Activated B cell treated with CpG ODN at 0.5 μM for 24 hours (primary cell): ENCODE measurements at regions of chr9 and their contacts with region 1.

Region 1: GRCh38 chr9:127916665-127917613 is at the start of gene ST6GALNAC4:
- DNase-seq: peak; percentile 94
- ATAC-seq: peak; percentile 83
- H3K4me3 Mint-ChIP-seq: peak within 1 kb of the TSS; percentile 88
- H3K27ac Mint-ChIP-seq: peak within 1 kb of the TSS; percentile 95
- H3K4me1 Mint-ChIP-seq: peaks cover 74% of the 10 kb centered on the region
- H3K27me3 Mint-ChIP-seq: no peaks in the 10 kb centered on the region
- CTCF ChIP-seq: no peak
- total RNA-seq, gene ST6GALNAC4: 71.3 and 85.4 TPM in 2 replicates

Region 2: DNA sequence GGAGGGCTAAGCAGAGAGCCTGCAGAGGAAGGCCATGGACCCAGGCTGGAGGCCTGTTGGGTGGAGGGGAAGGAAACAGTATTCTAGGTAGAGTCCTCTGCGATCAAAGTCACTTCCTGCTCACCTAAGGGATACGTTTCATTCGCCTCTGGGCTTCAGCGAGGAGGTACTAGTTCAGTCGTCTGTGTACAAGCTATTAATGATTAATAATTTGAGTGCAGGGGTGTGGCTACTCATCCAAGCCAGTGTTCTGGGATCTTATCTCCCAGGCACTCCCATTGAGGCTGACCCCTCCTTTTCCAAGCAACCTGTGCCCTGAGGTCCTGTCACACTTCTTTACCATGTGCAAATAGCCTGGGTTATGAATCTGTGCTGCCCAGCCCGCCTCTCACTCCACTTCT is 977.1 kb before region 1 on chr9:
- CTCF ChIA-PET with region 1: no interaction called
- POLR2A ChIA-PET with region 1: no interaction called
- intact Hi-C with region 1: loop called (anchors 2 kb)
- DNase-seq: no peak
- ATAC-seq: no peak
- H3K4me3 Mint-ChIP-seq: no peak overlapping the region
- H3K27ac Mint-ChIP-seq: no peak overlapping the region
- H3K4me1 Mint-ChIP-seq: peaks cover 5% of the 10 kb centered on the region
- H3K27me3 Mint-ChIP-seq: no peaks in the 10 kb centered on the region
- CTCF ChIP-seq: no peak

Region 3: DNA sequence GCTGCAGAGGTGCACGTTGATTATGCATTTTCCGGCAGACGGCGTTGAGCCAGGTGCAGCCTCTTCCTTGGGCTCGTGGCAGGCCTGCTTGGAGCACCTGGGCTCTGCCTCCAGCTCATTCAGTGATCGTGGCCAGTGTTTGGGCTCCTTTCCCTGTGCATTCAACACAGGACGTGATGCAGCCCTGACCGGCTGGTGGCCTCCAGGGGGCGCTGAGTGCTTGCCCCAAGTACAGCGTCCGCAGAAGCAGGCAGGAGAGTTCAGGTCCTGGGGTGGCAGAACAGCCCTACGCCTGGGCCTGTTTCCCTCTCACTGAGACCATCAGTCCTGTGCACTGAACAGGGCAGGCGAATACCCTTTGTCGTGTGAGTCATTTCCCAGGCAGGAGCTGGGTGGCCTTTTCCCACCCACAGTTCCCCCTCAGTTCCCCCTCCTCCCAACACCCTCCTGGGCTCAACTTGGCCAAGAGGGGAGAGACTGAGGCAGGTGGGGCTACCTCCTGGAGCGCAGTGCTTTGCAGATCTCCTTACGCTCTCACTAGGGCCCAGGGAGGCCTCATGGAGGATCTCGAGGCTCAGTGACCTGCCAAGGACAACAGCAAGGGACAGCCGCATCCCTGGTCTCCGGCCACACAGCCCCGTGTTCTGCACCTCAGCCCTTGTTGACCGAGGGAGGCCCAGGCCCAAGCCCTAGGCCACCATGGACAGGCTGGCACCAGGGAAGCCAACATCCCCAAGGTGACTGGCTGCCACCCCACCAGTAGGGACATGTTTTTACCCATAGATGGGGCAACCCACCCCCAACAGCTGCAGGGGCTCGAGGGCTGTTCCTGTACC is 412.8 kb before region 1 on chr9:
- CTCF ChIA-PET with region 1: interaction called, 4 read pairs
- POLR2A ChIA-PET with region 1: no interaction called
- intact Hi-C with region 1: loop called (anchors 1 kb)
- DNase-seq: peak; percentile 60
- ATAC-seq: peak; percentile 93
- H3K4me3 Mint-ChIP-seq: no peak overlapping the region
- H3K27ac Mint-ChIP-seq: no peak overlapping the region
- H3K4me1 Mint-ChIP-seq: no peaks in the 10 kb centered on the region
- H3K27me3 Mint-ChIP-seq: no peaks in the 10 kb centered on the region
- CTCF ChIP-seq: no peak

Region 4: GRCh38 chr9:127770905-127771569 is 145.9 kb before region 1 on chr9:
- CTCF ChIA-PET with region 1: interaction called, 5 read pairs
- POLR2A ChIA-PET with region 1: interaction called, 11 read pairs
- intact Hi-C with region 1: loop called (anchors 1 kb)
- DNase-seq: peak; percentile 98
- ATAC-seq: peak; percentile 90
- H3K4me3 Mint-ChIP-seq: peak overlapping the region; percentile 93
- H3K27ac Mint-ChIP-seq: peak overlapping the region; percentile 93
- H3K4me1 Mint-ChIP-seq: peaks cover 72% of the 10 kb centered on the region
- H3K27me3 Mint-ChIP-seq: no peaks in the 10 kb centered on the region
- CTCF ChIP-seq: no peak

Region 5: GRCh38 chr9:127802576-127803443 is 114.1 kb before region 1 on chr9 and contains the start of gene FPGS:
- CTCF ChIA-PET with region 1: interaction called, 3 read pairs
- POLR2A ChIA-PET with region 1: interaction called, 6 read pairs
- intact Hi-C with region 1: loop called (anchors 1 kb)
- DNase-seq: peak; percentile 81
- ATAC-seq: peak; percentile 84
- H3K4me3 Mint-ChIP-seq: peak within 1 kb of the TSS; percentile 93
- H3K27ac Mint-ChIP-seq: peak within 1 kb of the TSS; percentile 87
- H3K4me1 Mint-ChIP-seq: peaks cover 32% of the 10 kb centered on the region
- H3K27me3 Mint-ChIP-seq: no peaks in the 10 kb centered on the region
- CTCF ChIP-seq: no peak
- total RNA-seq, gene FPGS: 105 and 135 TPM in 2 replicates

Region 6: GRCh38 chr9:127887792-127888191 is 29.1 kb before region 1 on chr9:
- CTCF ChIA-PET with region 1: interaction called, 11 read pairs
- POLR2A ChIA-PET with region 1: interaction called, 19 read pairs
- intact Hi-C with region 1: no loop called
- DNase-seq: no peak
- ATAC-seq: peak; percentile 80
- H3K4me3 Mint-ChIP-seq: no peak overlapping the region
- H3K27ac Mint-ChIP-seq: no peak overlapping the region
- H3K4me1 Mint-ChIP-seq: peaks cover 18% of the 10 kb centered on the region
- H3K27me3 Mint-ChIP-seq: no peaks in the 10 kb centered on the region
- CTCF ChIP-seq: no peak

Region 7: GRCh38 chr9:127937388-127938280 is 20.7 kb after region 1 on chr9 and contains the start of gene DPM2:
- CTCF ChIA-PET with region 1: interaction called, 6 read pairs
- POLR2A ChIA-PET with region 1: interaction called, 3 read pairs
- intact Hi-C with region 1: loop called (anchors 1 kb)
- DNase-seq: peak; percentile 82
- ATAC-seq: peak; percentile 96
- H3K4me3 Mint-ChIP-seq: peak within 1 kb of the TSS; percentile 94
- H3K27ac Mint-ChIP-seq: peak within 1 kb of the TSS; percentile 94
- H3K4me1 Mint-ChIP-seq: peaks cover 37% of the 10 kb centered on the region
- H3K27me3 Mint-ChIP-seq: no peaks in the 10 kb centered on the region
- CTCF ChIP-seq: no peak
- total RNA-seq, gene DPM2: 41.4 and 50.6 TPM in 2 replicates

Region 8: DNA sequence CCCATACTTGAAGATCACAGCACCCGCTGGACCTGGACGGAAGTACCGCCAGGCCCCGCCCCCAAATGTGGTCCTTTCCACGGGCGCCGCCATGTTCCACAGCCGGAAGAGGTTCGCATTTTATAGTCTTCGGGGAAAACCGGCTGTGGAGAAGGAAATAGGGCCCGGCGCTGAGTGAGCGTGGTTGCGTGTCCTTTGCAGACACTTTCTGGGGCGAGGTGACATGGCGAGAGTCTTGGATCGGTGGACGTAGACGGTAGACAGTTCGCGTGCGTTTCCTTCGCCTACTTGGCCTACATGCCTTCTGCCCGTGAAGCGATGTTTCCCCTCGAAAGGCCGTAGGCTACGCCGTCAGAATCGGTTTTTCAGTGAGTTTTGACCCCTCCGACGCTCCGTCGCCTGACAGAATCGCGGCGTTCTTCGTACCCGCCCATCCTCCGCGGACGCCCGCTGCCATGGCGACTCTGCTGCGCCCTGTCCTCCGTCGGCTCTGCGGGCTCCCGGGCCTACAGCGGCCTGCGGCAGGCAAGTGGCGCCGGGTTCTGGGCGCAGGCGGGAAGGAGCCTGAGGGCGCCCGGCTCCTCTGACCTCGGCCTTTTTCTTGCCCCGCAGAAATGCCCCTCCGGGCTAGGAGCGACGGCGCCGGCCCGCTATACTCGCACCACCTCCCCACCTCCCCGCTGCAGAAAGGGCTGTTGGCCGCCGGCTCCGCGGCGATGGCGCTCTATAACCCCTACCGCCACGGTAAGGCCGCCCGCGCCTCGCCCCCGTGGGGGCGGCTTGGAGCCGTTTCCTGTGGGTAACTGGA is 405.7 kb after region 1 on chr9 and contains the starts of genes COQ4 and TRUB2:
- CTCF ChIA-PET with region 1: no interaction called
- POLR2A ChIA-PET with region 1: no interaction called
- intact Hi-C with region 1: no loop called
- DNase-seq: peak; percentile 86
- ATAC-seq: peak; percentile 88
- H3K4me3 Mint-ChIP-seq: peak within 1 kb of the TSS; percentile 92
- H3K27ac Mint-ChIP-seq: peak within 1 kb of the TSS; percentile 97
- H3K4me1 Mint-ChIP-seq: peaks cover 19% of the 10 kb centered on the region
- H3K27me3 Mint-ChIP-seq: no peaks in the 10 kb centered on the region
- CTCF ChIP-seq: no peak
- total RNA-seq, gene COQ4: 36.2 and 45.6 TPM in 2 replicates
- total RNA-seq, gene TRUB2: 28.0 and 32.6 TPM in 2 replicates

Region 9: GRCh38 chr9:128643519-128644300 is 726.8 kb after region 1 on chr9:
- CTCF ChIA-PET with region 1: no interaction called
- POLR2A ChIA-PET with region 1: no interaction called
- intact Hi-C with region 1: no loop called
- DNase-seq: peak; percentile 44
- ATAC-seq: peak; percentile 84
- H3K4me3 Mint-ChIP-seq: peak overlapping the region; percentile 45
- H3K27ac Mint-ChIP-seq: peak overlapping the region; percentile 84
- H3K4me1 Mint-ChIP-seq: peaks cover 23% of the 10 kb centered on the region
- H3K27me3 Mint-ChIP-seq: no peaks in the 10 kb centered on the region
- CTCF ChIP-seq: no peak